ENCODE measurements at regions of chr3 and their contacts with region 1.

Region 1: GRCh38 chr3:98022978-98023820 is 11.9 kb downstream of the GABRR3 start:
- DNase-seq: peak; percentile 96
- ATAC-seq: peak; percentile 87
- H3K4me3 Mint-ChIP-seq: no peak overlapping the region
- H3K27ac Mint-ChIP-seq: peak overlapping the region; percentile 11
- H3K4me1 Mint-ChIP-seq: peaks cover 4% of the 10 kb centered on the region
- H3K27me3 Mint-ChIP-seq: no peaks in the 10 kb centered on the region

Region 2: DNA sequence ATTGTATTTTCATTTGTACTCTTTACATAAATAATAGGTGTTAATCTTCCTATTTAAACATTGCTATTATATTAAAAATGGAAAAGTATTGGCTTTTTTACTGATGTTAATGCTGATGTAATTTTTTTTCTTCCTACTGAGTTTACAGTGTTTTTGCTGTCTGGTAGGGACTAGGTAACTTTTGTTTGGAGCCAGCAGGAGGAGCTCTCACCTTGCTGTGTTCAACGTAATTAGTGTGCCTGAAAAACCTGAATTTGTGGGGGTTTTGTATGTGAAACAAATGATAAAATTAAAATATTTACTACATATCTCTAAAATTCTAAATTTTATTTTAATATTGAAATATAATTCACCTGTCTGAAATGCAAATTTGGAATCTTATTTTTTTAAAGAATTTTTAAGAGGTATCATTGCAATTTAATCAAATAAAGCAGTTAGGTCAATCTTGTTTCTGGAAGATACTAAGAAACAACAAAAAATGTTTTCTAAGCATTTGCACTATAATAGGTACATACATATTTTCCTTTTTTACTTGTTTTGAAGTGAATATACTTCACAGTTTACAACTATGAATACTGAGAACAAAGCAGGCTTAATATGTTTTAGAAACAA is 1160.0 kb before region 1 on chr3:
- CTCF ChIA-PET with region 1: no interaction called
- POLR2A ChIA-PET with region 1: no interaction called
- intact Hi-C with region 1: loop called in 1 of 2 experiments (anchors 10 kb)
- DNase-seq: peak; percentile 33
- ATAC-seq: no peak
- H3K4me3 Mint-ChIP-seq: no peak overlapping the region
- H3K27ac Mint-ChIP-seq: no peak overlapping the region
- H3K4me1 Mint-ChIP-seq: no peaks in the 10 kb centered on the region
- H3K27me3 Mint-ChIP-seq: no peaks in the 10 kb centered on the region

Region 3: DNA sequence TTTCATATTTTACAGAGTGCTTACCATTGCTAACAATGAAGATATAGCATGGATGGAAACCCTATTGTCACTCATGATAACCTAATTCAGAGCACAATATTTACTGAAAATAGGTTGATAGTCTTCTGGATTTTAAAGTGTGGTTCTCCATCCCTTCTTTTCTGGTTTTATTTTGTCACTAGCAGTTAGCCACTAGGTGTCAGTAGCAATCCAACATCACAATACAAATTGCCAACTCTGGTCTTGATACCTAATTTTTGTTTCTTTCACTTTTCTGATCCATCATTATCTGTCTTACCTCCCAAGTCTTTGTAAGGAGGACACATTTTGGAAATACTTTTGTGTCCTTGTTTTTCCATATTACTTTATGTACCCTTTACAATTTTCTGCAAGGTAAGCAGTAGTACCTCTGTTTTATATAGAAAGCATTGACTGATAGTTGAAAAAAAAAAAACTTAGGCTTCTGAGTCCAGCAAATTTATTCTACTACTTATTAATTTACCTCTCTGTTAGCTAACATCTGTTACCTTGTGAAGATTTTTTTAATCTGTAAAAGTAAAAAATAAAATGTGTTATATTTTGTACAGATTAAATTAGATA is 229.7 kb before region 1 on chr3:
- CTCF ChIA-PET with region 1: interaction called, 116 read pairs
- POLR2A ChIA-PET with region 1: no interaction called
- intact Hi-C with region 1: loop called (anchors 1 kb)
- DNase-seq: no peak
- ATAC-seq: peak; percentile 60
- H3K4me3 Mint-ChIP-seq: no peak overlapping the region
- H3K27ac Mint-ChIP-seq: no peak overlapping the region
- H3K4me1 Mint-ChIP-seq: no peaks in the 10 kb centered on the region
- H3K27me3 Mint-ChIP-seq: no peaks in the 10 kb centered on the region

Region 4: GRCh38 chr3:97815149-97815917 is 207.9 kb before region 1 on chr3:
- CTCF ChIA-PET with region 1: interaction called, 17 read pairs
- POLR2A ChIA-PET with region 1: no interaction called
- intact Hi-C with region 1: no loop called
- DNase-seq: peak; percentile 72
- ATAC-seq: peak; percentile 99
- H3K4me3 Mint-ChIP-seq: no peak overlapping the region
- H3K27ac Mint-ChIP-seq: peak overlapping the region; percentile 51
- H3K4me1 Mint-ChIP-seq: peaks cover 13% of the 10 kb centered on the region
- H3K27me3 Mint-ChIP-seq: peaks cover 10% of the 10 kb centered on the region

Region 5: DNA sequence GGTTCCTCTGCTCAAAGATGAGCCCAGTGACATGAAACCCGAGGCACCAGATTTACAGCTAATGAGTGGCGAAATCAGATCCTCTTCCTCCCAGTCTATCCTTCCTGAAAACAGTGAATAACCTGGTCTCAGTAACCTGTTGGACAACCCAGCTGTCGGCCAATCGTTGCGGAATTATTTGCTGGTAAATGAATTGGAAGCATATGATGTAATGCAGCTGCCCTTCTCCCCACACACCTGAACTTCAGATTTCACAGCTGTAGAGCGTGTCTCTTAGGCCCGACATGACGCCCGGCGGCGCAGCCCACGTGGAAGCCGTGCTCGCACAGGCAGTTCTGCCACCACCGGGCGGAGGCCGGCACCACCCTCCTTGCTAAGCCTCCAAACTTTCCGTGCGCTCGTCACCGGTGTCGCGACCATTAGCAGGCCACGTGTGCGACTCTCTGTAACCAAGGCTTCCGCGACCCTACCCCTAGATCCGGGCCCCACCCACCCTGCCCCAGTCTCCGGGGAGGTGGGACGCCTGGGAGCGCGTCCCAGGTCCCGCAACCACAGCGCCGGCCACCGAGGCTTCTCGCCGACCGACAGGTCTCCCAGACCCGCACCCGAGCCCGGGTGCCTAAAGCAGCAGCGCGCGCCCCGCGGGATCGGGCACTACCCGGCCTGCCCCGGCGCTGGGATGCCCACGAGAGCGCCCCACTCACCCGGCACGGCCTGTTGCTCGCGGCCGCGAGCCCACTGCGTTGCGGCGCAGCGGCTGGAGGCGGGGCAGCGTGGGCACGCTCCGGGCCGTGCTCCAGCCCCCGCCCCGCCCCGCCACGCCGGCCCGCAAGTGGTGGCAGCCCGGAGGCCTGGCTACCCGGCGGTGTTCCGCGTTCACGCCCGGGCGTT is 51.3 kb before region 1 on chr3 and contains the start of gene RIOX2:
- CTCF ChIA-PET with region 1: interaction called, 15 read pairs
- POLR2A ChIA-PET with region 1: no interaction called
- intact Hi-C with region 1: loop called (anchors 1 to 2 kb)
- DNase-seq: peak; percentile 90
- ATAC-seq: peak; percentile 89
- H3K4me3 Mint-ChIP-seq: peak within 1 kb of the TSS; percentile 83
- H3K27ac Mint-ChIP-seq: peak within 1 kb of the TSS; percentile 90
- H3K4me1 Mint-ChIP-seq: peaks cover 46% of the 10 kb centered on the region
- H3K27me3 Mint-ChIP-seq: no peaks in the 10 kb centered on the region
- total RNA-seq, gene RIOX2: 35.0 to 35.5 TPM